Heart left ventricle (tissue), 16 donors: ENCODE measurements at regions of chr5 and their contacts with region 1.

Region 1: GRCh38 chr5:149381987-149382340 is 2.9 kb upstream of the IL17B start:
- DNase-seq: peak; percentile 83 to 91 (median 85)
- ATAC-seq: peak; percentile 59 to 83 (median 76)
- H3K4me3 ChIP-seq: peak overlapping the region in 4 of 12 donors; percentile 11 to 30 (median 16)
- H3K27ac ChIP-seq: peak overlapping the region; percentile 25 to 98 (median 90)
- H3K4me1 ChIP-seq: peaks cover 8 to 69% (median 41%) of the 10 kb centered on the region in 12 donors
- H3K27me3 ChIP-seq: no peaks in the 10 kb centered on the region
- CTCF ChIP-seq: peak; percentile 92 to 98 (median 96)
- POLR2A ChIP-seq: no peak

Region 2: GRCh38 chr5:149268928-149269557 is 112.9 kb before region 1 on chr5:
- intact Hi-C with region 1: no loop called
- DNase-seq: no peak
- ATAC-seq: no peak
- H3K4me3 ChIP-seq: no peak overlapping the region
- H3K27ac ChIP-seq: peak overlapping the region in 5 of 12 donors; percentile 7 to 50 (median 39)
- H3K4me1 ChIP-seq: peaks cover 0 to 29% (median 17%) of the 10 kb centered on the region in 12 donors
- H3K27me3 ChIP-seq: peaks cover 0 to 24% (median 0%) of the 10 kb centered on the region in 9 donors
- CTCF ChIP-seq: peak; percentile 56 to 92 (median 75)
- POLR2A ChIP-seq: no peak

Region 3: DNA sequence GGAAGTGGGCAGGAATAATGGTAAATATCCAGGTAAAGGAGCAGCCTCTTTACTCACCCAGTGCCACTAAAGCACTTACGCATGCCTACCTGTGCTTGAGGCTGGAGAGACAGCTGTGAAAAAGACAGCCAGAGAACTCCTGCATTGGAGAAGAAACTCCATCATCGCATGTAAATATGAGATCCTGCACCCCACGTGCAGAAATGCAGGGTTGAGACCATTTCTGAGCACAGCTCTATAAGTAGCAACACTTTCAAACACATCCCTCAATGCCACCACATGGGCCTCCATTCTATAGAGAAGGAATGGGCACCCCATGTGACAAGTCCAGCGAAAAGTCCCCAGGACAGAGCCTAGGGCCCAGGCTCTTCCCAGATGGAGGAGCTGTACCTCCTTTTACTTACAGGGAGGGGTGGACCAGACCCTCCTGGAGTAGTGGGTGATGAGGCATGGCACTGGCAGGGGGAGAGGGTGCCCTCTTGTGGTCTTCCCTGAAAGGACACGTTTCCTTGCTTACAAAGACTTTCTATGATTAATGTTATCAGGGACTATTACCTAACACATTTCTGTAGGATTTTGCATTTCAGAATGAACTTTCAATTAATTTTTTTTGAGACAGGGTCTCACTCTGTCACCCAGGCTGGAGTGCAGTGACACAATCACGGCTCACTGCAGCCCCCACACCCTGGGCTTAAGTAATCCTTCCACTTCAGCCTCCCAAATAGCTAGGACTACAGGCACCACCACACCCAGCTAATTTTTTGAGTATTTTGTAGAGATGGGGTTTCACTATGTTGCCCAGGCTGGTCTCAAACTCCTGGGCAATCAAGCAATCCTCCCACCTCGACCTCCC is 52.4 kb after region 1 on chr5:
- intact Hi-C with region 1: loop called (anchors 1 to 2 kb)
- DNase-seq: peak in 3 of 5 donors; percentile 60 to 64 (median 62)
- ATAC-seq: peak; percentile 14 to 27 (median 22)
- H3K4me3 ChIP-seq: no peak overlapping the region
- H3K27ac ChIP-seq: peak overlapping the region in 10 of 12 donors; percentile 8 to 97 (median 44)
- H3K4me1 ChIP-seq: peaks cover 7 to 47% (median 23%) of the 10 kb centered on the region in 12 donors
- H3K27me3 ChIP-seq: no peaks in the 10 kb centered on the region
- CTCF ChIP-seq: peak; percentile 82 to 94 (median 88)
- POLR2A ChIP-seq: no peak

Region 4: DNA sequence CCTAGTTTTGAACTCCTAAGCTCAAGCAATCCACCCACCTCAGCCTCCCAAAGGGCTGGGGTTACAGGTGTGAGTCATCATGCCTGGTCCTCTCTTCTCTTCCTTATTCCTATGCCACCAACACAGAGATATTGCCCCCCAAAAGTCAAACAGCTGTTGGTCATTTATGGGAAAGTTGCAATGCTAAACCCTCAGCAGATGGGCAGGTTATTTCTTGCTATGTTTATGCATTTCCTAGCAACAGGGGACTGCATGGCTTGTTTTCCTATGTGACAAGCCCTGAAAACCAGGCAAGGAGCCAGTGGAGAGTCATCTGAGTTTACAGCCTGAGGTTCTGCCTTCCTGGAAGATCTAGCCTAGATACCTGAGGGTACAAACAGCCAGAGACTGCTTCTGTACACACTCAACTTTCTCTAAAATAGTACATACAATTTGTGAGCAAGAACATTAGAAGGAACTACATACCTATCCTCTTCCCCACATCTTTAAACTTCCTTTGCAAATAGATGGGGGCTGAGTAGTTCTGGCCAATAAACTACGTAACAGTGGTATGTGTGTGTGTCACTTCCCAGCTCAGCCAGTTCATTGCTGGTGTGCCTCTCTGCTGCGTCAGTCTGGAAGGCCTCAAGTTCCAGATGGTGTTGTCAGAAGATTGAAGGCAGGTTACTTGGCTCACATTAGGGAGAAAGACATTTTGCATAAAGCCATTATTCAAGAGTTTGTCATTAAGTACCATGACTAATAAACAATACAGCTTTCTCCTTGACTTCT is 103.9 kb after region 1 on chr5:
- intact Hi-C with region 1: no loop called
- DNase-seq: peak in 4 of 5 donors; percentile 88 to 94 (median 90)
- ATAC-seq: peak; percentile 84 to 91 (median 88)
- H3K4me3 ChIP-seq: no peak overlapping the region
- H3K27ac ChIP-seq: peak overlapping the region; percentile 64 to 98 (median 88)
- H3K4me1 ChIP-seq: peaks cover 0 to 61% (median 42%) of the 10 kb centered on the region in 12 donors
- H3K27me3 ChIP-seq: no peaks in the 10 kb centered on the region
- CTCF ChIP-seq: no peak
- POLR2A ChIP-seq: no peak